Gastrocnemius medialis (tissue), 4 donors: ENCODE measurements at regions of chr6 and their contacts with region 1.

Region 1: DNA sequence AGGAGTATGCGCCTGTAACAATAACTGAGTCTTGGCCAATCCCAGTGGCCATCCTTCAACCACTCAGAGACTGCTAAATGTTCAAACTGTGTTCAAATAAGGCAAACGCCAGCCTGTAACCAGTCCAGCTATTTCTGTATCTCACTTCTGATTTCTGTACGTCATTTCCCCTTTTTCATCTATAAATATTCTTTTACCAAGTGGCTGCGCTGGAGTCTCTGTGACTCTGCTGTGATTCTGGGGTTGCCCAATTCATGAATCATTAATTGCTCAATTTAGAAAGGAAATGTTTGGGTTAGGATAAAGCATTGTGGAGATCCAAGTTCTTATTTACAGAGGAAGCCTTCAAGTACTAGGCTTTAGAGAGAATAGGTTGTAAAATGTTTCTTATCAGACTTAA is 89.8 kb upstream of the UST start:
- DNase-seq: no peak
- ATAC-seq: no peak
- H3K4me3 ChIP-seq: no peak overlapping the region
- H3K27ac ChIP-seq: no peak overlapping the region
- H3K4me1 ChIP-seq: no peaks in the 10 kb centered on the region
- H3K27me3 ChIP-seq: no peaks in the 10 kb centered on the region
- CTCF ChIP-seq: no peak
- POLR2A ChIP-seq: no peak

Region 2: GRCh38 chr6:147135211-147135681 is 1521.8 kb before region 1 on chr6:
- in situ Hi-C with region 1: no loop called
- intact Hi-C with region 1: loop called (anchors 10 kb)
- DNase-seq: peak in 1 of 2 donors; percentile 11
- ATAC-seq: no peak
- H3K4me3 ChIP-seq: no peak overlapping the region
- H3K27ac ChIP-seq: no peak overlapping the region
- H3K4me1 ChIP-seq: no peaks in the 10 kb centered on the region
- H3K27me3 ChIP-seq: no peaks in the 10 kb centered on the region
- CTCF ChIP-seq: no peak
- POLR2A ChIP-seq: no peak